Heart right ventricle (tissue), 16 donors: ENCODE measurements at regions of chr16 and their contacts with region 1.

Region 1: DNA sequence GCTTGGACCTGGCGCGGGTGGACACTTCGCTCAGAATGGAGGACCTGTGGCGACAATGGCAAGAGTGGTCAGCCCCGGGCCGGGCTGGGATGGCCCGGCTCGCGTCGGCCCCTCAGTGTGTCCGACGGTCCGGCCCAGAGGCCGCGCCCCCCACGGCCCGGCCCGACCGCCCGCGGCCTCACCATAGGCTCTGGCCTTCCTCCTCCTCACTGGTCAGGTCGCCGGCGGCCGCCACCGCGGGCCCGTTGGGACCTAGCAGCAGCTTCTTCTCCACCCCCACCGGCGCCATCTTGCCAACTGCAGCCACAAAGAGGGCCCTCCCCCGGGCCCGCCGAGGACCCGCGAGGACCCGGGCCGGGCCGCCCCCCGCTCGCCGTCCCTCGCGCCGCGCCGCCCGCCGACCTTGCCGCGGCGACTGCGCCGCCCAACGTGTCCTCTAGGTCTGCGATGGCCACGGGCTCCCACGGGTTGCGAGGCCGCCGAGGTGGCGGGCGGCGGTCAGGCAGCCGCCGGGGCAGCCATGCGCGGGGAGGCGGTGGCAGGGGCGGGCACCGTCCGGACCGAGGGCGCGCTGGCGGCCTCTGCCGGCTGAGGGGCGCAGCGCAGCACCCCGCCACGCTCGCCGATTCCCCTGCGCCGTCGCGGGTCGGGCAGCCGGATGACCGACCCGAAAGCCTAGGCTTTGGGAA is at the start of gene DYNC1LI2:
- DNase-seq: peak; percentile 83 to 84
- ATAC-seq: peak; percentile 85 to 95 (median 92)
- H3K4me3 ChIP-seq: peak within 1 kb of the TSS; percentile 59 to 100 (median 98)
- H3K27ac ChIP-seq: peak within 1 kb of the TSS; percentile 92 to 99 (median 97)
- H3K4me1 ChIP-seq: peaks cover 0 to 51% (median 31%) of the 10 kb centered on the region in 9 donors
- H3K27me3 ChIP-seq: peaks cover 0 to 20% (median 0%) of the 10 kb centered on the region in 7 donors
- CTCF ChIP-seq: peak; percentile 69 to 97 (median 86)
- total RNA-seq, gene DYNC1LI2: 70.4 to 109 (median 89.0) TPM

Region 2: DNA sequence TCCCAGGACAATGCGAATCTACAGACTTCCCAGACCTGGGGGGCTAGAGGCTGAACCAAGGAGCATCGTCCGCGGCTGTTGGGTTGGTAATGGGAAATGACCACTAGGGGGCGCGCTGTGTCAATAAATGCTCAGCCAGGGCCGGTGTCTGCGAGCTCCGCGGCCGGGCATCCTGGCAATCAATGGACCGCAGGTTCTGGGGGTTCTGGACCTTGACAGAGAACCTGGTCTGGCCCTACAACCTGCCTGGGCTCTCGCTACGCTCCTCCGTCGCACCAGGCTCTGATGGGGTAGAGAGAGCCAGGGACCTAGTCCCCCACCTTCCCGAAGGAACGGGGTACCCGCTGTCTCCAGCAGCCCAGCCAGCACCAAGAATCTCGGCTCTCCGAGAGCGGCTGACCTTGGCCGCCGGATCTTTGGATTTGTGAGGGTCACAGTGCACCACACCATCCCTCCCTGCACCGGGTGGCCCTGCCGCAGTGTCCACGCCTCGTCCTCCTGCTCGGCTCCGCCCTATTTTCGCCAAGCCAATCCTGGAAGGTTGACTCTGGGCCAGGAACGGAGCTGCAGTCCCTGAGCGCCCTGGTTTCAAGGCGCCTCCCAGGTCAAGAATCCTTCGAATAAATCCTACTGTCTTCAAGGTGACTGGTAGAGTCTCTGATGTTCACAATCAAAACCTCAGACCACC is 344.8 kb before region 1 on chr16:
- intact Hi-C with region 1: loop called in 1 of 10 experiments (anchors 5 kb)
- DNase-seq: peak; percentile 88 to 91
- ATAC-seq: peak; percentile 77 to 94 (median 88)
- H3K4me3 ChIP-seq: peak overlapping the region; percentile 37 to 81 (median 60)
- H3K27ac ChIP-seq: peak overlapping the region in 9 of 10 donors; percentile 28 to 81 (median 65)
- H3K4me1 ChIP-seq: peaks cover 6 to 38% (median 34%) of the 10 kb centered on the region in 9 donors
- H3K27me3 ChIP-seq: no peaks in the 10 kb centered on the region
- CTCF ChIP-seq: peak; percentile 85 to 96 (median 93)

Region 3: DNA sequence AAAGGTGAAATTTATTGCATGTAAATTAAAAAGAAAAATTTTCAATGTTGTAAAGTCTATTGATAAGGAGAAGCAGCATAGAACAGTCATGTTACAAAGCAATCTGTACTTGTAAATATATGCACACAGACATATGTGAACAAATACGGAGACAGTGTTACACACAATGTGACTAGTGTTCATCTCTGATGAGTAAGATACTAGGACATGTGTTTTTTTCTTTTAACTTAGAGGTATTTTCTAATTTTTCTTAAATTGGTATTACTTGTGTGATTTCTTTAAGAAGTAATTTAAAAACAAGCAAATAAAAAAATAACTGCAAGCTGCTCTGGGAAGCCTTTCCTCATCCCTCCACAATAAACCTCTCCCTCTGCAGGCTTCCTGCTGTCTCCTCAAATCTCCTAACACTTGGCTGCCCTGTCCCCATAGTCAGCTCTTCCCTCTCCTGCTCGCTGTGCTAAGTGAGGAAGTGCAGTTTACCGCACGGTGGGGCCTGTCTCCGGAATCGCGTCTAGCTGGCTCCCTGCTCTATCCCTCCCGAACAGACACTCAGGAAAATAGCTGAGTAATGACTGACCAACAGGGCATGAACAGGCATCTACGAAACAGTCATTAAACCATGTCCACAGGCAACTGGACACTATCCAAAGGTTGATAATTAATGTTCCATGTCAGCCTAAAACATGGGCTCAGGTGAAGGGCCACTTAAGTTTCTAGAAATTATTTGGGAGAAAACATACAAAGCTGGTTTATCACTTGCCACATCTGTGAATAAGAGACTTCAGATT is 90.8 kb before region 1 on chr16:
- intact Hi-C with region 1: loop called in 1 of 10 experiments (anchors 5 kb)
- DNase-seq: peak; percentile 57 to 64
- ATAC-seq: peak; percentile 93 to 97 (median 96)
- H3K4me3 ChIP-seq: no peak overlapping the region
- H3K27ac ChIP-seq: peak overlapping the region; percentile 1 to 79 (median 54)
- H3K4me1 ChIP-seq: peaks cover 8 to 39% (median 29%) of the 10 kb centered on the region in 9 donors
- H3K27me3 ChIP-seq: no peaks in the 10 kb centered on the region
- CTCF ChIP-seq: peak in 5 of 9 donors; percentile 12 to 49 (median 41)

Region 4: GRCh38 chr16:66728117-66728787 is 23.2 kb before region 1 on chr16:
- intact Hi-C with region 1: loop called in 2 of 10 experiments (anchors 1 to 2 kb)
- DNase-seq: peak in 1 of 2 donors; percentile 48
- ATAC-seq: peak; percentile 73 to 92 (median 84)
- H3K4me3 ChIP-seq: no peak overlapping the region
- H3K27ac ChIP-seq: peak overlapping the region in 1 of 10 donors; percentile 36
- H3K4me1 ChIP-seq: peaks cover 0 to 20% (median 8%) of the 10 kb centered on the region in 9 donors
- H3K27me3 ChIP-seq: no peaks in the 10 kb centered on the region
- CTCF ChIP-seq: peak; percentile 53 to 79 (median 74)

Region 5: DNA sequence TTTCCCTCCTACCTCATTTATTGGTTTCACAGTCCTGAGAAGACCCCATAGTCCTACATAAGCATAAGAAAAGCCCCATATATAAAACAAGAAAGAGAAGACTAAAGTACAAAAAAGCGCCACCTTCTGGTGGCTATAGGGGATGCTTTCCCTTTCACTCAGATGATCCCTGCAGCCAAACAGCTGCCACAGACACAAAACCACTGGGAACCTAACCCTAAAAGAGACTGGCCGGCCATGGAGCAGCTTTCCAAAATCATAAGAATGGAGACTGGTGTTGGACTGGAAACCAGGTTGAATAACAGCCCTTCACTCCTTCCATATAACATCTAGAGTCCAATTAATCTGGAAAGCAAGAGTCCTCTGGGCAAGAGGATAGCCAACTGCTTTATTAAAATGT is 11.4 kb before region 1 on chr16:
- intact Hi-C with region 1: loop called in 1 of 10 experiments (anchors 1 kb)
- DNase-seq: no peak
- ATAC-seq: peak in 2 of 8 donors; percentile 13 to 21
- H3K4me3 ChIP-seq: peak overlapping the region in 1 of 10 donors; percentile 7
- H3K27ac ChIP-seq: peak overlapping the region; percentile 70 to 93 (median 83)
- H3K4me1 ChIP-seq: peaks cover 27 to 67% (median 44%) of the 10 kb centered on the region in 9 donors
- H3K27me3 ChIP-seq: no peaks in the 10 kb centered on the region
- CTCF ChIP-seq: peak; percentile 15 to 71 (median 58)

Region 6: GRCh38 chr16:66830422-66831404 is 79.3 kb after region 1 on chr16 and contains the start of gene NAE1:
- intact Hi-C with region 1: no loop called
- DNase-seq: peak; percentile 80 to 92
- ATAC-seq: peak; percentile 97 to 99 (median 98)
- H3K4me3 ChIP-seq: peak within 1 kb of the TSS; percentile 77 to 96 (median 86)
- H3K27ac ChIP-seq: peak within 1 kb of the TSS; percentile 46 to 94 (median 90)
- H3K4me1 ChIP-seq: peaks cover 5 to 25% (median 14%) of the 10 kb centered on the region in 9 donors
- H3K27me3 ChIP-seq: no peaks in the 10 kb centered on the region
- CTCF ChIP-seq: peak; percentile 95 to 100 (median 99)
- total RNA-seq, gene NAE1: 29.6 to 35.9 (median 31.3) TPM